Activated CD4-positive, alpha-beta T cell treated with anti-CD3 and anti-CD28 coated beads, Interleukin-2, amount 10 ng/mL, durations not matched to agents 24 days and 14 days (primary cell): ENCODE measurements at regions of chr12 and their contacts with region 1.

Region 1: GRCh38 chr12:110742718-110743570 is at the start of gene PPP1CC:
- DNase-seq: peak; percentile 97
- H3K4me3 Mint-ChIP-seq: peak within 1 kb of the TSS; percentile 99
- H3K27ac Mint-ChIP-seq: peak within 1 kb of the TSS; percentile 99
- H3K4me1 Mint-ChIP-seq: peaks cover 35% of the 10 kb centered on the region
- H3K27me3 Mint-ChIP-seq: no peaks in the 10 kb centered on the region
- total RNA-seq, gene PPP1CC: 459 and 489 TPM in 2 replicates

Region 2: GRCh38 chr12:110583137-110584059 is 159.5 kb before region 1 on chr12 and contains the start of gene PPTC7:
- intact Hi-C with region 1: loop called (anchors 2 kb)
- DNase-seq: peak; percentile 98
- H3K4me3 Mint-ChIP-seq: peak within 1 kb of the TSS; percentile 98
- H3K27ac Mint-ChIP-seq: peak within 1 kb of the TSS; percentile 97
- H3K4me1 Mint-ChIP-seq: peaks cover 58% of the 10 kb centered on the region
- H3K27me3 Mint-ChIP-seq: no peaks in the 10 kb centered on the region
- total RNA-seq, gene PPTC7: 57.9 and 58.4 TPM in 2 replicates

Region 3: GRCh38 chr12:110726708-110727369 is 16.1 kb before region 1 on chr12:
- intact Hi-C with region 1: loop called (anchors 2 kb)
- DNase-seq: no peak
- H3K4me3 Mint-ChIP-seq: no peak overlapping the region
- H3K27ac Mint-ChIP-seq: peak overlapping the region; percentile 71
- H3K4me1 Mint-ChIP-seq: peaks cover 39% of the 10 kb centered on the region
- H3K27me3 Mint-ChIP-seq: no peaks in the 10 kb centered on the region

Region 4: GRCh38 chr12:110762891-110763290 is 19.9 kb after region 1 on chr12:
- intact Hi-C with region 1: loop called (anchors 2 kb)
- DNase-seq: no peak
- H3K4me3 Mint-ChIP-seq: peak overlapping the region; percentile 68
- H3K27ac Mint-ChIP-seq: peak overlapping the region; percentile 90
- H3K4me1 Mint-ChIP-seq: peaks cover 15% of the 10 kb centered on the region
- H3K27me3 Mint-ChIP-seq: no peaks in the 10 kb centered on the region

Region 5: DNA sequence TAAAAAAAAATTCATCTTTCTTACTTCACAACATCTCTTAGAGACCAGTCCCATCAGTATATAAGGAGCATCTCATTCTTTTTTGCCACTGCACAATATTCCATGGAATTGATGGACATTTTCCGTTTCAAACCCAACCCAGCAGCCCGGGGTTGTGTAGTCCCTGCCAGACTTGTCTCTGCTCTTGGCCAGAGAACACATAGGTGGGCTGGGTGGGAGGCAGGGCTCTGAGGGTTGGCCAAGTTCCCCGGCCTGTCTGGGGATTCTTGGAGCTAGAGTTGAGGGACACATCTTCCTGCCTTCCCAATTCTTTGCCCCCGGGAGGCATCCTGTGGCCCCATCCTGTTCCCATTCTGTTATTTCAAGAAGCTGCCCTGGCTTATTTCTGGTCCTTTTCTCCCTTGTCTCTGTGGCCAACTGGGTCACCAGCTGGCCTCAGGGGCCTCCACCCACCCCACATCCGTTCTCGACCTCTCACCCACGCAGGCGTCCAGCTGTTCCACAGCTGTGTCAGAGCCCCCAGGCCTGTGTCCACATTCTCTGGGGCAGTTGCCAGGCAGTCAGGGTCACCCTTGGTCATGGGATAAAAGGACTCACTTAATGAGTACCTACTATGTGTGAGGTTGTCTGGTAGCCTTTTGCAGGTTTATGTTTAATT is 51.8 kb after region 1 on chr12:
- intact Hi-C with region 1: no loop called
- DNase-seq: no peak
- H3K4me3 Mint-ChIP-seq: no peak overlapping the region
- H3K27ac Mint-ChIP-seq: no peak overlapping the region
- H3K4me1 Mint-ChIP-seq: peaks cover 21% of the 10 kb centered on the region
- H3K27me3 Mint-ChIP-seq: no peaks in the 10 kb centered on the region